CD4-positive, alpha-beta T cell (primary cell): ENCODE measurements at regions of chr19 and their contacts with region 1.

Region 1: DNA sequence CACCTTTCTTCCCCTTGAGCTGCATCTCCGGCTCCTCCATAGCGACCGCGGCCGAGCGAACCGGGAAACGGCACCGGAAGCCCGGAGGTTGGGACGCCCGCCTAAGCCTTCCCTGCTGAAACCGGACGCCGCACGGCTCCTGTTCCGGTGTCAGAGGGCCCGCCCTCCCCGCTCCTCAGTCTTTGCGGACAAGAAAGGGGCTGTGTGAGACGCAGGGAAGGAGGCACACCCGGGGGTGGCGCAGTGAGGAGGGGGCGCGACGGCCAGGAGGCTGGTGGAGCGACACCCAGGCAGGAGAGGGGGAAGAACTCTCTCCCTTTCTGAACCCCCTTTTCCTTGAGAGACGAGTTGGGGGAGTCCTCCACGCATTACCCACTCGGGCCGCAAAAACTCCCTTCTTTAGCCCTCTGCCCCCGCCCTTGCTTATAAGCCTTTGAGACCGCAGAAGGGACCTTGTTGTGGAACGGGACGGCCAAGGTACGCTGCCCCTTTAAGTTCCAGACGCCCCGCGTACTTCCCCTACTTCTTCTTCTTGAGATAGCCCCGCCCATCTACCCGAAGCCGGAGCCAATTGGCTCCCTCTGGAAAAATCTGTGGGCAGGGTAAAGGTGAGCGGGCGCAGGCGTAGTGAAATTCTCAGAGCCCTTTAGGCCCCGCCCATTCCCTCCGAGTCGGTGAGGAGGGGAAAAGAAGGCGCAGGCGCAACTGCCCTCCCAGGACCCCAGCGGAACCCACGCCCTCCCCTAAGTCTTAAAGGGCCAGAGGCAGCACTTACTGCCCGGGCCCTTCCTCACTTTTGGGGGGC is at the starts of genes BORCS8 and RFXANK:
- DNase-seq: peak; percentile 96 to 100 (median 98)
- ATAC-seq: peak; percentile 90
- H3K4me3 ChIP-seq: peak within 1 kb of the TSS; percentile 94
- H3K4me3 Mint-ChIP-seq: peak within 1 kb of the TSS; percentile 97
- H3K27ac ChIP-seq: peak within 1 kb of the TSS; percentile 100
- H3K27ac Mint-ChIP-seq: peak within 1 kb of the TSS; percentile 97
- H3K4me1 ChIP-seq: peaks cover 48% of the 10 kb centered on the region
- H3K4me1 Mint-ChIP-seq: peaks cover 56% of the 10 kb centered on the region
- H3K27me3 ChIP-seq: no peaks in the 10 kb centered on the region
- H3K27me3 Mint-ChIP-seq: no peaks in the 10 kb centered on the region
- CTCF ChIP-seq: no peak
- total RNA-seq, gene BORCS8: 12.0 to 15.0 TPM
- total RNA-seq, gene RFXANK: 36.3 to 37.2 TPM

Region 2: GRCh38 chr19:18557474-18558201 is 634.6 kb before region 1 on chr19 and contains the start of gene KXD1:
- CTCF ChIA-PET with region 1: no interaction called
- POLR2A ChIA-PET with region 1: no interaction called
- intact Hi-C with region 1: loop called in 1 of 2 experiments (anchors 2 kb)
- DNase-seq: peak; percentile 93 to 100 (median 97)
- ATAC-seq: peak; percentile 99
- H3K4me3 ChIP-seq: peak within 1 kb of the TSS; percentile 99
- H3K4me3 Mint-ChIP-seq: peak within 1 kb of the TSS; percentile 94
- H3K27ac ChIP-seq: peak within 1 kb of the TSS; percentile 94 to 97
- H3K27ac Mint-ChIP-seq: peak within 1 kb of the TSS; percentile 98
- H3K4me1 ChIP-seq: peaks cover 30% of the 10 kb centered on the region
- H3K4me1 Mint-ChIP-seq: peaks cover 26% of the 10 kb centered on the region
- H3K27me3 ChIP-seq: no peaks in the 10 kb centered on the region
- H3K27me3 Mint-ChIP-seq: no peaks in the 10 kb centered on the region
- CTCF ChIP-seq: no peak
- total RNA-seq, gene KXD1: 64.2 to 66.9 TPM

Region 3: GRCh38 chr19:19063183-19064097 is 128.8 kb before region 1 on chr19 and contains the start of gene SLC25A42:
- CTCF ChIA-PET with region 1: no interaction called
- POLR2A ChIA-PET with region 1: interaction called, 3 read pairs
- intact Hi-C with region 1: loop called in 1 of 2 experiments (anchors 5 kb)
- DNase-seq: peak; percentile 97 to 100 (median 99)
- ATAC-seq: peak; percentile 91
- H3K4me3 ChIP-seq: peak within 1 kb of the TSS; percentile 73
- H3K4me3 Mint-ChIP-seq: peak within 1 kb of the TSS; percentile 86
- H3K27ac ChIP-seq: peak within 1 kb of the TSS; percentile 44 to 61
- H3K27ac Mint-ChIP-seq: peak within 1 kb of the TSS; percentile 65
- H3K4me1 ChIP-seq: peaks cover 49% of the 10 kb centered on the region
- H3K4me1 Mint-ChIP-seq: peaks cover 35% of the 10 kb centered on the region
- H3K27me3 ChIP-seq: no peaks in the 10 kb centered on the region
- H3K27me3 Mint-ChIP-seq: no peaks in the 10 kb centered on the region
- CTCF ChIP-seq: no peak
- total RNA-seq, gene SLC25A42: 15.1 to 15.4 TPM

Region 4: GRCh38 chr19:19203012-19203856 is 11.0 kb after region 1 on chr19 and contains the start of gene NR2C2AP:
- CTCF ChIA-PET with region 1: interaction called, 4 read pairs
- POLR2A ChIA-PET with region 1: interaction called, 80 read pairs
- intact Hi-C with region 1: loop called (anchors 1 kb)
- DNase-seq: peak; percentile 83 to 97 (median 89)
- ATAC-seq: peak; percentile 93
- H3K4me3 ChIP-seq: peak within 1 kb of the TSS; percentile 89
- H3K4me3 Mint-ChIP-seq: peak within 1 kb of the TSS; percentile 94
- H3K27ac ChIP-seq: peak within 1 kb of the TSS; percentile 77 to 82
- H3K27ac Mint-ChIP-seq: peak within 1 kb of the TSS; percentile 94
- H3K4me1 ChIP-seq: peaks cover 48% of the 10 kb centered on the region
- H3K4me1 Mint-ChIP-seq: peaks cover 29% of the 10 kb centered on the region
- H3K27me3 ChIP-seq: no peaks in the 10 kb centered on the region
- H3K27me3 Mint-ChIP-seq: peaks cover 12% of the 10 kb centered on the region
- CTCF ChIP-seq: no peak
- total RNA-seq, gene NR2C2AP: 10.5 to 11.5 TPM

Region 5: GRCh38 chr19:19276386-19276785 is 84.1 kb after region 1 on chr19:
- CTCF ChIA-PET with region 1: no interaction called
- POLR2A ChIA-PET with region 1: no interaction called
- intact Hi-C with region 1: no loop called
- DNase-seq: no peak
- ATAC-seq: no peak
- H3K4me3 ChIP-seq: no peak overlapping the region
- H3K4me3 Mint-ChIP-seq: no peak overlapping the region
- H3K27ac ChIP-seq: no peak overlapping the region
- H3K27ac Mint-ChIP-seq: no peak overlapping the region
- H3K4me1 ChIP-seq: peaks cover 6% of the 10 kb centered on the region
- H3K4me1 Mint-ChIP-seq: peaks cover 7% of the 10 kb centered on the region
- H3K27me3 ChIP-seq: peaks cover 6 to 10% of the 10 kb centered on the region in 2 experiments
- H3K27me3 Mint-ChIP-seq: peaks cover 19% of the 10 kb centered on the region
- CTCF ChIP-seq: no peak

Region 6: DNA sequence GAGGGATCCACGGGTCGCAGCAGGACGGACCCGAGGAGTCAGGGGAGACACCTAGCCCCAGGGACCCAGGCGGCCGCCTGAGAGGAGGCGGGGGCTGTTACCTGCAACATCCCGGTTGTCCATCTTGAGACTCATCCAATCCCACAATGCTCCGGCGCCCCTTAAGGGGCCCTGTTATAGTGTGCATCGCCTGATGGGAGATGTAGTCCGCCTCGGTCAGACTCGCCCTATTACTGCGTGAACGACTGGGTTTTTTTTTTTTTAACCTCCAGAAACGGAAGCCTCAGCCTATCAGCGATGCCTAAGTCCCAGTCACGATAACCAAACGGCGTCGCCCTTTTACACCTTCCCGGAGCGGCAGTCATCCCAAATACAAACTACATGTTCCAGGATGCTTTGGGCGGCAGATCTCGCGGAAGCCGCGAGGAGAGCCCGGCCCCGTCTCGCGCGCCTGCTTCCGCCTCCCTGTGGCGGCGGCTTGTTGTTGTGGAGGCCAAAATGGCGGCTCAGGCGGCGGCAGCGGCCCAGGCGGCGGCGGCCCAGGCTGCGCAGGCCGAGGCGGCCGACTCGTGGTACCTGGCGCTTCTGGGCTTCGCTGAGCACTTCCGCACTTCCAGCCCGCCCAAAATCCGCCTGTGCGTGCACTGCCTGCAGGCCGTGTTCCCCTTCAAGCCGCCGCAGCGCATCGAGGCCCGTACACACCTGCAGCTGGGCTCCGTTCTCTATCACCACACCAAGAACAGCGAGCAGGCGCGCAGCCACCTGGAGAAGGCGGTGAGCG is 128.3 kb after region 1 on chr19 and contains the starts of genes MAU2 and SUGP1:
- CTCF ChIA-PET with region 1: no interaction called
- POLR2A ChIA-PET with region 1: interaction called, 5 read pairs
- intact Hi-C with region 1: loop called (anchors 1 to 2 kb)
- DNase-seq: peak; percentile 81 to 96 (median 88)
- ATAC-seq: peak; percentile 88
- H3K4me3 ChIP-seq: peak within 1 kb of the TSS; percentile 71
- H3K4me3 Mint-ChIP-seq: peak within 1 kb of the TSS; percentile 100
- H3K27ac ChIP-seq: peak within 1 kb of the TSS; percentile 92 to 95
- H3K27ac Mint-ChIP-seq: peak within 1 kb of the TSS; percentile 99
- H3K4me1 ChIP-seq: peaks cover 57% of the 10 kb centered on the region
- H3K4me1 Mint-ChIP-seq: peaks cover 43% of the 10 kb centered on the region
- H3K27me3 ChIP-seq: no peaks in the 10 kb centered on the region
- H3K27me3 Mint-ChIP-seq: no peaks in the 10 kb centered on the region
- CTCF ChIP-seq: peak; percentile 16
- total RNA-seq, gene MAU2: 132 to 133 TPM
- total RNA-seq, gene SUGP1: 49.7 to 56.0 TPM